Activated CD8-positive, alpha-beta T cell treated with anti-CD3 and anti-CD28 coated beads, Interleukin-2, amount 10 ng/mL, durations not matched to agents 7 days and 5 days (primary cell): ENCODE measurements at regions of chr15 and their contacts with region 1.

Region 1: DNA sequence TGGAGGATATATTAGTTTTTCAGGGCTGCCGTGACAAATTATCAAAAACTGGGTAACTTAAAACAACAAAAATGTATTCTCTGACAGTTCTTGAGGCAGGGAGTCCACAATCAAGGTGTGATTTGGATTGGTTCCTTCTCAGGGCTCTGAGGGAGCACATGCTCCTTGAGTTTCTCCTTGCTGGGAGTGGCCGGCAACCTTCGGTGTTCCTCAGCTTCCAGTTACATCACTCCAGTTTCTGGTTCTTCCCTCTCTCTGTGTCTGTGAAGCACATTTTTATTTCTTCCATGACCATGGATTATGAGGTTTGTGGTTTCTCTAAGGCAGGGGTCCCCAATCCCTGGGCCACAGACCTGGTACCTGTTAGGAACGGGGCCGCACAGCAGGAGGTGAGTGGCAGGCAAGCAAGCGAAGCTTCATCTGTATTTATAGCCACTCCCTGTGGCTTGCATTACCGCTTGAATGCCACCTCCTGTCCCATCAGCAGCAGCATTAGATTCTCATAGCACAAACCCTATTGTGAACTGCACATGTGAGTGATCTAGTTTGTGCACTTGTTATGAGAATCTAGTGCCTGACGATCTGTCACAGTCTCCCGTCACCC is 24.3 kb downstream of the LRRC28 start:
- DNase-seq: no peak
- ATAC-seq: no peak
- H3K4me3 Mint-ChIP-seq: no peak overlapping the region
- H3K27ac Mint-ChIP-seq: no peak overlapping the region
- H3K4me1 Mint-ChIP-seq: peaks cover 23% of the 10 kb centered on the region
- H3K27me3 Mint-ChIP-seq: no peaks in the 10 kb centered on the region

Region 2: DNA sequence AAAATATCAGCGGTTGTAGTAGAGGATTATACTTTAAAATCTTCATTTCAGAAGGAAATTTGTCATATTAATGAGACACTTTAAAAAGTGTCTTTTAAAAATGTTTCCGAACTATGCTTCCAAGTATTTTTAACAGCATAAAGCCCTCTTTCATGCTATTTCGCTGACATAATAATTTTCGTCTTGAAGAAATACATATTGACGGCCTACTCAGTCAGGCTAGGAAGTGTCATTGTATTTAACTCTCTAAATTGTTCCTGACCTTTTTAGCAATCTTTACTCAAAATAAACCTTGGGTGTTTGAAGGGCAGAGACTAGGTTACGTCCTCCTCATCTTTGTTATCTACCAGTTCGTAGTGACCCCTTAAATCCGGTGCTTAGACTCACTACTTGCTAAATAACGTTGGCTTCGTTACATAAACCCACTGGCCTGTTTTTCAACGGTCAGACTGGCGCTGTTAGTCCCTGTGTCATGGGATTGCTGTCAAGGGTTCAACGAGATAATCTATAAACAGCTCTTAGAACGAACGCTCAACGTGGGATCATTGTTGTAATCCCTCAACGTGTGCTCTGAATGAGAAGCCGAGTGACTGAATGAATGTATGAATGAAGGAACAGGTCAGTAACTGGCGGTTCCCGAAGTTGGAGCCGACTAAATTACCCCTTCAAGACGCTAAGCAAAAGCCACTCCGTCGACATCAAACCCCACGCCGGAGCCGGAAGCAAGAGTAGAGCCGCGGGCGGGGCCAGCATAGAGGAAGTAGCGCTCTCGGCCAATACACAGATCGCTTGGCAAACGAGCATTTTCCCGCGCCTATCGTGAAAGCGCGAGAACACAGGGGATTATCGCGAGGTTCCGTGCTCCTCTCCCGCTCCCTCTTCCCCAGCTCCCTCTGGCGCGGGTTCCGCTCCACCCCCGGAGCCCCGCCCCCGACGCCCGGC is 24.9 kb before region 1 on chr15:
- CTCF ChIA-PET with region 1: interaction called, 31 read pairs
- POLR2A ChIA-PET with region 1: interaction called, 3 read pairs
- DNase-seq: peak; percentile 99
- ATAC-seq: peak; percentile 99
- H3K4me3 Mint-ChIP-seq: peak overlapping the region; percentile 87
- H3K27ac Mint-ChIP-seq: peak overlapping the region; percentile 91
- H3K4me1 Mint-ChIP-seq: peaks cover 24% of the 10 kb centered on the region
- H3K27me3 Mint-ChIP-seq: peaks cover 5% of the 10 kb centered on the region

Region 3: DNA sequence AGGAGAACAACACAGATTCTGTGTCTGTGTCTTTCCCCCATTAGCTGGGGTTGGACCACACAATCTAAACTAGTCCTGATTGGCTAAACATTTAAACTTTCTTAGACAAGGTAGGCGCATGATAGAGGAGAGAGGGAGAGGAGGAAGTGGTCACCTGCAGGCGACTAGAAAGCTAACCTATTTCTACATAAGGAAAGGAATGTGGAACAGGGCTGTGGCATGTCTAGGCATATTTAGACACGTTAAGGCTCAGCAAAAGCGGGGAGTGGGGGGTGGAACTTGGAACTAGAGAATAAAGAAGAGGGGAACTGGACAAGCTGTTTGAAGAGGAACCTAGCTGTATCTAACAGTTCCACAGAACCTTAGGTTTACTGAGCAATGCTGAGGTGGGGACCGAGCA is 11.5 kb before region 1 on chr15:
- CTCF ChIA-PET with region 1: interaction called, 33 read pairs
- POLR2A ChIA-PET with region 1: no interaction called
- DNase-seq: no peak
- ATAC-seq: peak; percentile 36
- H3K4me3 Mint-ChIP-seq: no peak overlapping the region
- H3K27ac Mint-ChIP-seq: no peak overlapping the region
- H3K4me1 Mint-ChIP-seq: peaks cover 23% of the 10 kb centered on the region
- H3K27me3 Mint-ChIP-seq: no peaks in the 10 kb centered on the region

Region 4: DNA sequence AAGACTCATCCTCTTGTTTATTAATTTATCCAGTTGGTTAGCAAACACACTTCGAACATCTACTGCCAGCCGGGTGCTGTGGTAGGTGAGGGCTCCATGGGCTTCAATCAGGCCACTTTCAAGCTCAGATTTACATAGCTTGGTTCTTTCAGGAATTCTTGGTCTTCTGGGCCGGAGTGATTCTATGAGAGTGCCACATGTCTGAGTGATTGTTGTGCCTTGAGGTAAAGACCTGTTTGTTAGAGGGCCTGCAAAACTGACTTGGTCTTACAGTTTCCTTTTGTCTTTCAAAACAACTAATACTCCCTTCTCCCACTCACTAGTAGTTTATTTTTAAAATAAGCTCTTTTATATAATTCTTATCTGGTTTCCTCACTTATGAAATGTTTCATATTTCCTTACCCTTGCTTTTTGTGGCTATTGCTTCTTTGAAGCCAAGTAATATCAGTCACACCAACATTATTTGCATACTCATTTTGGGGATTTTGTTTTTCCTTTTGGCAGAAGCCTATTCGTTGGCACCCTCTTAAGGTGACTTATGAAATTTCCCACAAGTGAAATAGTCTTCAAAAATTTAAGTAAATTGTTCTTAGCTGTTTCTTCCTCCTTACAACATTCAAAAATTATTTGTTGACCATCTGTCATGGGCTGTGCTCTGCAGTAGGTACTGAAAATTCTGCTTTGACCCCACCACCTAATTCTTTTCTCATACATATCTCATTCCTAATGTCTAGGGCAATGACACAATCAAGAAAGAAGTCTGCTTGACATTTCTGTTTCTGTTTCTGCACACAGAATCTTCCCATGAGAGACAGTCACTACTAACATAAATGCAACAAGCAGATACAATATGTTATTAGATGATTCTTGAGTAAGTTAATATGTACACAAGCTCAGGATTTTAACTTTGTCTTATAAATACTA is 95.8 kb after region 1 on chr15:
- CTCF ChIA-PET with region 1: interaction called, 14 read pairs
- POLR2A ChIA-PET with region 1: no interaction called
- DNase-seq: no peak
- ATAC-seq: no peak
- H3K4me3 Mint-ChIP-seq: no peak overlapping the region
- H3K27ac Mint-ChIP-seq: no peak overlapping the region
- H3K4me1 Mint-ChIP-seq: peaks cover 16% of the 10 kb centered on the region
- H3K27me3 Mint-ChIP-seq: no peaks in the 10 kb centered on the region

Region 5: GRCh38 chr15:99733268-99734039 is 457.8 kb after region 1 on chr15 and contains the start of gene LYSMD4:
- CTCF ChIA-PET with region 1: interaction called, 15 read pairs
- POLR2A ChIA-PET with region 1: no interaction called
- DNase-seq: peak; percentile 99
- ATAC-seq: peak; percentile 100
- H3K4me3 Mint-ChIP-seq: peak within 1 kb of the TSS; percentile 77
- H3K27ac Mint-ChIP-seq: peak within 1 kb of the TSS; percentile 90
- H3K4me1 Mint-ChIP-seq: peaks cover 23% of the 10 kb centered on the region
- H3K27me3 Mint-ChIP-seq: no peaks in the 10 kb centered on the region
- total RNA-seq, gene LYSMD4: 8.9 to 13.0 TPM

Region 6: GRCh38 chr15:99755692-99756409 is 480.2 kb after region 1 on chr15:
- CTCF ChIA-PET with region 1: interaction called, 79 read pairs
- POLR2A ChIA-PET with region 1: no interaction called
- DNase-seq: peak; percentile 58
- ATAC-seq: peak; percentile 88
- H3K4me3 Mint-ChIP-seq: no peak overlapping the region
- H3K27ac Mint-ChIP-seq: no peak overlapping the region
- H3K4me1 Mint-ChIP-seq: peaks cover 7% of the 10 kb centered on the region
- H3K27me3 Mint-ChIP-seq: peaks cover 11% of the 10 kb centered on the region